Activated B cell treated with CpG ODN at 0.5 μM for 24 hours (primary cell): ENCODE measurements at regions of chr6 and their contacts with region 1.

Region 1: DNA sequence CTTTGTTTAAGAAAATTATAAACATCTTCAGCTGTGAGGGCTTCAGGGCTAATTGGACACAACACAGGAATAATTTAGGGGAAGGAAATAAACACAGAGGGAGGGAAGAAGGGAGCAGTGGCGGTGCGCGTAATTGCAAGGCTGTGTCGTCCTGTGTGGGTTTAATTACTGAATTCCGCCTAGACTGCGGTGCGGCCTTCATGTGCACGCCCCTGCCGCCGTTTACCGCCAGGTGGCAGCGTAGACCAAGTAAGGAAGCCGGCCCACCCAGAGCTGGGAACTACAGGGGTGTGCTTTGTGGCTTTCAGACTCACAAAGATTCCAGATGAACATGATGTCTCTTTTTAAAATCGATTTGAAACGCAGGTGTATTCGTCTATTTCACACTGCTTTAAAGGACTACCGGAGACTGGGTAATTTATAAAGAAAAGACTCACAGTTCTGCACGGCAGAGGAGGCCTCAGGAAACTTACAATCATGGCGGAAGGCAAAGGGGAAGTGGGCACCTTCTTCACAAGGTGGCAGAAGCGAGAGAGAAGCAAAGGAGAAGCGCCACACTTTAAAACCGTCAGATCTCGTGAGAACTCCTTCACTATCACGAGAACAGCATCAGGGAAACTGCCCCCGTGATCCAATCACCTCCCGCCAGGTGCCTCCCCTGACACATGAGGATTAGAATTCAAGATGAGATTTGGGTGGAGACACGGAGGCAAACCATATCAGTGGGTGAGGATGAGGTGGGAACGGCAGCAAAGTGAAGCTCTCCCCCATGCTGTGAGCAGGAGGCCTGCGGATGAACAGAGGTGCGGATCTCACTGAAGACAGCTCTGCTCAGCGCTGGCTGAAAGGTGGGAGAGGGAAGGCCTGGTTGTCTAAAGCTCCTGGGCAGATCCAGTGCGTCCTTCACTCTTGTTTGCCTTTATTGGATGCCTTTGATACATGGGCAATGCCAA is 222.0 kb upstream of the PDE10A start:
- DNase-seq: peak; percentile 52
- ATAC-seq: peak; percentile 96
- H3K4me3 Mint-ChIP-seq: peak overlapping the region; percentile 66
- H3K27ac Mint-ChIP-seq: peak overlapping the region; percentile 80
- H3K4me1 Mint-ChIP-seq: peaks cover 11% of the 10 kb centered on the region
- H3K27me3 Mint-ChIP-seq: peaks cover 3% of the 10 kb centered on the region
- CTCF ChIP-seq: peak; percentile 37

Region 2: GRCh38 chr6:166097915-166098522 is 212.9 kb after region 1 on chr6:
- CTCF ChIA-PET with region 1: interaction called, 3 read pairs
- POLR2A ChIA-PET with region 1: no interaction called
- intact Hi-C with region 1: loop called (anchors 1 kb)
- DNase-seq: peak; percentile 30
- ATAC-seq: peak; percentile 74
- H3K4me3 Mint-ChIP-seq: peak overlapping the region; percentile 1
- H3K27ac Mint-ChIP-seq: no peak overlapping the region
- H3K4me1 Mint-ChIP-seq: peaks cover 4% of the 10 kb centered on the region
- H3K27me3 Mint-ChIP-seq: peaks cover 36% of the 10 kb centered on the region
- CTCF ChIP-seq: no peak

Region 3: GRCh38 chr6:166106076-166106686 is 221.1 kb after region 1 on chr6:
- CTCF ChIA-PET with region 1: interaction called, 10 read pairs
- POLR2A ChIA-PET with region 1: no interaction called
- intact Hi-C with region 1: loop called (anchors 1 kb)
- DNase-seq: peak; percentile 26
- ATAC-seq: peak; percentile 45
- H3K4me3 Mint-ChIP-seq: peak overlapping the region; percentile 32
- H3K27ac Mint-ChIP-seq: no peak overlapping the region
- H3K4me1 Mint-ChIP-seq: peaks cover 5% of the 10 kb centered on the region
- H3K27me3 Mint-ChIP-seq: peaks cover 13% of the 10 kb centered on the region
- CTCF ChIP-seq: no peak